ENCODE measurements at regions of chr11 and their contacts with region 1.

Region 1: GRCh38 chr11:24344222-24344621 is 152.6 kb upstream of the LUZP2 start:
- DNase-seq: no peak
- ATAC-seq: no peak
- H3K4me3 ChIP-seq: no peak overlapping the region
- H3K27ac ChIP-seq: no peak overlapping the region
- H3K4me1 ChIP-seq: no peaks in the 10 kb centered on the region
- H3K27me3 ChIP-seq: no peaks in the 10 kb centered on the region; a peak in 1 of 5 replicates
- CTCF ChIP-seq: no peak
- EP300 ChIP-seq: no peak
- POLR2A ChIP-seq: no peak
- RAD21 ChIP-seq: no peak

Region 2: DNA sequence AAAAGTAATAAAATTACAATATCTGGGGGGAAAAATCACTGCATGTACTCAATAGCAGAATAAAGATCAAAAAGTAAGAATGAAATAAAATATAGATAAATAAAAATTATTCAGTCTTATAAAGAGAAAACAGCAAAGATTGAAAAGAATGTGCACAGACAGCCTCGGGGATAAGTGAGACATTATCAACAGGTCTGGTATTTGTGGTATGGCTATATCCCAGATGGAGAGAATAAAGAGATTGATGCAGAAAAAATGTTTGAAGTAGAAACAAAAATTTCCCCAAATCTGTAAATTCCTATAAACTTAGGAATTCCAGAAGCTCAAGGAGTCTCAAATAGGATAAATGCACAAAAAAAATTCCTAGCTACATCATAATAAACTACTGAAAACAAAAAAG is 78.2 kb after region 1 on chr11:
- CTCF ChIA-PET with region 1: no interaction called
- POLR2A ChIA-PET with region 1: no interaction called
- in situ Hi-C with region 1: no loop called
- intact Hi-C with region 1: no loop called
- DNase-seq: no peak
- ATAC-seq: no peak
- H3K4me3 ChIP-seq: no peak overlapping the region
- H3K27ac ChIP-seq: no peak overlapping the region
- H3K4me1 ChIP-seq: no peaks in the 10 kb centered on the region
- H3K27me3 ChIP-seq: no peaks in the 10 kb centered on the region
- CTCF ChIP-seq: no peak
- EP300 ChIP-seq: no peak
- POLR2A ChIP-seq: no peak
- RAD21 ChIP-seq: no peak

Region 3: GRCh38 chr11:25485315-25485714 is 1141.1 kb after region 1 on chr11:
- CTCF ChIA-PET with region 1: no interaction called
- POLR2A ChIA-PET with region 1: no interaction called
- in situ Hi-C with region 1: no loop called
- intact Hi-C with region 1: loop called (anchors 10 kb)
- DNase-seq: no peak
- ATAC-seq: no peak
- H3K4me3 ChIP-seq: no peak overlapping the region
- H3K27ac ChIP-seq: no peak overlapping the region
- H3K4me1 ChIP-seq: no peaks in the 10 kb centered on the region
- H3K27me3 ChIP-seq: no peaks in the 10 kb centered on the region
- CTCF ChIP-seq: no peak
- EP300 ChIP-seq: no peak
- POLR2A ChIP-seq: no peak
- RAD21 ChIP-seq: no peak